Endothelial cell of umbilical vein (primary cell): ENCODE measurements at regions of chr11 and their contacts with region 1.

Region 1: GRCh38 chr11:110026858-110027626 is 66.2 kb upstream of the ZC3H12C start:
- DNase-seq: no peak
- H3K4me3 ChIP-seq: no peak overlapping the region
- H3K27ac ChIP-seq: no peak overlapping the region
- H3K4me1 ChIP-seq: peaks cover 8% of the 10 kb centered on the region
- H3K27me3 ChIP-seq: no peaks in the 10 kb centered on the region
- CTCF ChIP-seq: no peak
- POLR2A ChIP-seq: no peak

Region 2: DNA sequence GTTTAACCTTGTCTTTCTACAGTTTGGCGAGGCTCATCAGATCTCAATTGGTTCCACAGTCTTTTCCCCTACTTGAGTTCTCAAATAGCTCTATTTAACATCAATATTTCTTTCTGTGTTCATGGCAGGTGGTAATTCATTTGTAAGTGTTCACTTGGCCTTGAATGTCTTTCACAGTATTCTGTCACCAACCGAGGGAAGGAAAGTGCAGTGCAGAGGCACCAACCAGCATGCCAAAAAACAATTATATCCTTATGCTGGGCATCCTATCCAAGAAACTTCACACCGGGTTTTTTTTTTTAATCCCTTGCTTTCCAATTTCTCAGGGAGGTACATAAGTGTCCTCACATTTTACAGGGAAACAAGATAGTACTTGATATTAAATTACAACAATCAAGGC is 11.2 kb after region 1 on chr11:
- CTCF ChIA-PET with region 1: interaction called, 3 read pairs
- POLR2A ChIA-PET with region 1: no interaction called
- dilution Hi-C with region 1: no loop called
- intact Hi-C with region 1: loop called (anchors 1 kb)
- DNase-seq: no peak
- H3K4me3 ChIP-seq: no peak overlapping the region
- H3K27ac ChIP-seq: no peak overlapping the region
- H3K4me1 ChIP-seq: no peaks in the 10 kb centered on the region
- H3K27me3 ChIP-seq: no peaks in the 10 kb centered on the region
- CTCF ChIP-seq: no peak
- POLR2A ChIP-seq: no peak

Region 3: DNA sequence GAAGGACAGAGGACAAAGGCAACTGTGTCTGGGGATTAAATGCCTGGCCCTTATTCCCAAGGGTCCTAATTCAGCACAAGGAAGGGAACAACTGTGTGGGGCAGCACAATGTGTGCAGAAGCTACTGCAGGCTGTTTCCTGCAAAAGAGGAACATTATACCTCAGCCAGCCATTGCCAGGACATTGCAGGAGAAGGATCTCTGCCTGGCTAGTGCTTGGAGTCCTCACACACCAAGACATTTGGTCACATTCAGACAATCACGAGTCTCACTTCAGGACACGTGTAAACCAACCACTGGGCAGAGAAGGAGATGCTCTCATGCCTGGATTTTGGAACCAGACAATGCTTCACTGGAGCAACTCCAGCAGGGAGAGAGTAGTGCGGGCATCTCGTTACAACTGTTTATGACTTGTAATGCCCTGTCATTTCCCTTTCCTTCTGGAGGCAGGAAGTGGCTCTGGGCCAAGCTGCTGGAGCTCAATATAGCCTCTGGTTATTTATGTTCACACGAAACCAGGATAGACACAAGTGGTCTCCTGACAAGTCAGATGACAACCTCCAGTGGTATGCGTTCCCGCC is 42.2 kb after region 1 on chr11:
- CTCF ChIA-PET with region 1: no interaction called
- POLR2A ChIA-PET with region 1: no interaction called
- dilution Hi-C with region 1: no loop called
- intact Hi-C with region 1: loop called (anchors 2 kb)
- DNase-seq: peak; percentile 97
- H3K4me3 ChIP-seq: no peak overlapping the region
- H3K27ac ChIP-seq: peak overlapping the region; percentile 95
- H3K4me1 ChIP-seq: peaks cover 22% of the 10 kb centered on the region
- H3K27me3 ChIP-seq: no peaks in the 10 kb centered on the region
- CTCF ChIP-seq: no peak
- POLR2A ChIP-seq: peak; percentile 71